Activated CD4-positive, alpha-beta memory T cell treated with anti-CD3 and anti-CD28 coated beads for 36 hours (primary cell): ENCODE measurements at regions of chr9 and their contacts with region 1.

Region 1: DNA sequence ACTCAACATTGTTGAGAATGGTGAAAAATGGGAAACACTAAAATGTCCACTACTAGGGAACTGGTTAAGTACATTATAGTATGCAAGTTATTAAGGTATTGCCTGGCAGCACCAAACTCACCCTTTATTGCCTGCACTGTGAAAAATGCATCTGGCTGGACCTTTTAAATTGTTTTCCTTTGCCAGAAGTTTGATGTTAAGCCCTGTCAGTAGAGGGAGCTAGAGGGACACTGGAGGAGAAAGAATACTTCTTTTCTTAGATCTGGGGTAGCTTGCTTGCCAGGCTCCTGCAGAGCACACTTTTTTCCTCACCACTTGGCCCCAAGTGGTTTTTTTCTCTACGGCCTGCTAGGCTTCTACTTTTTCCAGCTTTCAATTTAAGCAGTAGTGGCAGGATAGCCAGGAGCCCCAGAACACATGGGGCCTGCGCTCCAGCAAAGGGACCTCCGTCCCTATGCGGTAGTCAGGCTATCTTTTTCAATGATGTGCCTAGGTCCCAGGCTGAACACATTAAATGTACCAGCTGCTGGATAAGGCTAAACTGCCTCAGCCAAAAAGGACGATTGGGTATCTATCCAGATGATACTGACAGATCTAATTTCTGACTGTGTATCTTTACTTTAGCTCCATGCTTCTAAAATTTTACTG is 8.0 kb upstream of the HABP4 start:
- DNase-seq: no peak
- H3K4me3 Mint-ChIP-seq: no peak overlapping the region
- H3K27ac Mint-ChIP-seq: no peak overlapping the region
- H3K4me1 Mint-ChIP-seq: no peaks in the 10 kb centered on the region
- H3K27me3 Mint-ChIP-seq: no peaks in the 10 kb centered on the region

Region 2: GRCh38 chr9:96217754-96218693 is 223.9 kb before region 1 on chr9:
- CTCF ChIA-PET with region 1: no interaction called
- POLR2A ChIA-PET with region 1: no interaction called
- intact Hi-C with region 1: no loop called
- DNase-seq: peak; percentile 77
- H3K4me3 Mint-ChIP-seq: peak overlapping the region; percentile 48
- H3K27ac Mint-ChIP-seq: no peak overlapping the region
- H3K4me1 Mint-ChIP-seq: peaks cover 16% of the 10 kb centered on the region
- H3K27me3 Mint-ChIP-seq: peaks cover 52% of the 10 kb centered on the region

Region 3: DNA sequence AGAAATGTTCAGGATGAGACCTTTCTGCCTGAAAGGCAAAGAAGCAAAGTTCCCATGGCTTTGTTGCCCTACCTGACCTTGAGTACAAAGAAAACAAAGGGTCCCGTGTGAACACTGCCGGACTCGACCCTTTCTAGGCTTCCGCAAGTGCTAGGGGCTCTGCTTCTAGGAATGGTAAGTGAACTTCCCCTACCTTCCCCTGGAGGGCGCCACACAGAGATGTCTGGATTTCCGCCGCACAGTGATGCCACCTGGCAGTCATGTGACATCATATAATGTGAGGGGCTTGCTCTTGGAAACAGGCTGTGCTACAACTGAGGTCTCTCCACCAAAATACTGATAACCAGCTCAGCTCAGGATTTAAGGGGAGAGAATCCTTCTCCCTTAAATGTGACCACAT is 196.5 kb before region 1 on chr9:
- CTCF ChIA-PET with region 1: no interaction called
- POLR2A ChIA-PET with region 1: no interaction called
- intact Hi-C with region 1: no loop called
- DNase-seq: peak; percentile 19
- H3K4me3 Mint-ChIP-seq: no peak overlapping the region
- H3K27ac Mint-ChIP-seq: no peak overlapping the region
- H3K4me1 Mint-ChIP-seq: peaks cover 17% of the 10 kb centered on the region
- H3K27me3 Mint-ChIP-seq: peaks cover 43% of the 10 kb centered on the region

Region 4: GRCh38 chr9:96667361-96667728 is 225.4 kb after region 1 on chr9:
- CTCF ChIA-PET with region 1: interaction called, 48 read pairs
- POLR2A ChIA-PET with region 1: no interaction called
- intact Hi-C with region 1: loop called (anchors 1 kb)
- DNase-seq: no peak
- H3K4me3 Mint-ChIP-seq: no peak overlapping the region
- H3K27ac Mint-ChIP-seq: no peak overlapping the region
- H3K4me1 Mint-ChIP-seq: no peaks in the 10 kb centered on the region
- H3K27me3 Mint-ChIP-seq: peaks cover 6% of the 10 kb centered on the region